ENCODE measurements at regions of chr17 and their contacts with region 1.

Region 1: GRCh38 chr17:7323731-7324437 is 5.3 kb downstream of the NEURL4 start:
- DNase-seq: no peak
- H3K4me3 ChIP-seq: no peak overlapping the region
- H3K27me3 ChIP-seq: no peaks in the 10 kb centered on the region
- CTCF ChIP-seq: peak; percentile 92

Region 2: GRCh38 chr17:7336240-7337175 is 12.6 kb after region 1 on chr17 and contains the start of gene ACAP1:
- CTCF ChIA-PET with region 1: interaction called, 13 read pairs
- POLR2A ChIA-PET with region 1: no interaction called
- DNase-seq: no peak
- H3K4me3 ChIP-seq: no peak within 1 kb of the TSS
- H3K27me3 ChIP-seq: peaks cover under 1% of the 10 kb centered on the region
- CTCF ChIP-seq: no peak
- polyA plus RNA-seq, gene ACAP1: 1.7 and 2.0 TPM in 2 replicates

Region 3: DNA sequence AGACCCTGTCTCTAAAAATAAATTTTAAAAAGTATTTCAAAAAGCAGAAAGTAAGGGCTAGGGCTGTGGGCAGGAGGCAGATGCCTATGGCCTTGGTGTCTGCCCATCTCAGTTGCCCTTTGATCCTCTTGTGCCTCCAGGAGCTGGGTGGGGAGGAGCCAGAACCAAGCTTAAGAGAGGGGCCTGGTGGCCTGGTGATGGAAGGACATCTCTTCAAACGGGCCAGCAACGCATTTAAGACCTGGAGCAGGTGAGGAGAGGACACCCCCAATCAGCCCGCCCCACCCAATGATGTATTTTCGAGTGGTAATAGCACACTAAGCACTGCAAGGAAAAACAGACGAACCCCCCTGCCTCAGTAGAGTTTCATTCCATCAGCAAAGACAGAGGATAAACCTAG is 20.5 kb after region 1 on chr17:
- CTCF ChIA-PET with region 1: interaction called, 11 read pairs
- POLR2A ChIA-PET with region 1: no interaction called
- DNase-seq: no peak
- H3K4me3 ChIP-seq: no peak overlapping the region
- H3K27me3 ChIP-seq: peaks cover 7% of the 10 kb centered on the region
- CTCF ChIP-seq: no peak

Measured in BJ (cell line).